Activated naive CD8-positive, alpha-beta T cell treated with anti-CD3 and anti-CD28 coated beads, Interleukin-2, amount 10 ng/mL, durations not matched to agents 7 days and 5 days (primary cell): ENCODE measurements at regions of chr14 and their contacts with region 1.

Region 1: GRCh38 chr14:22570132-22570949 is 18.7 kb downstream of the DAD1 start:
- DNase-seq: peak; percentile 64
- ATAC-seq: peak; percentile 85
- H3K4me3 Mint-ChIP-seq: peak overlapping the region; percentile 93
- H3K27ac Mint-ChIP-seq: peak overlapping the region; percentile 96
- H3K4me1 Mint-ChIP-seq: peaks cover 50% of the 10 kb centered on the region
- H3K27me3 Mint-ChIP-seq: no peaks in the 10 kb centered on the region

Region 2: GRCh38 chr14:21917699-21918436 is 652.5 kb before region 1 on chr14:
- POLR2A ChIA-PET with region 1: interaction called, 11 read pairs
- DNase-seq: no peak
- ATAC-seq: peak; percentile 59
- H3K4me3 Mint-ChIP-seq: peak overlapping the region; percentile 77
- H3K27ac Mint-ChIP-seq: peak overlapping the region; percentile 78
- H3K4me1 Mint-ChIP-seq: peaks cover 45% of the 10 kb centered on the region
- H3K27me3 Mint-ChIP-seq: no peaks in the 10 kb centered on the region

Region 3: DNA sequence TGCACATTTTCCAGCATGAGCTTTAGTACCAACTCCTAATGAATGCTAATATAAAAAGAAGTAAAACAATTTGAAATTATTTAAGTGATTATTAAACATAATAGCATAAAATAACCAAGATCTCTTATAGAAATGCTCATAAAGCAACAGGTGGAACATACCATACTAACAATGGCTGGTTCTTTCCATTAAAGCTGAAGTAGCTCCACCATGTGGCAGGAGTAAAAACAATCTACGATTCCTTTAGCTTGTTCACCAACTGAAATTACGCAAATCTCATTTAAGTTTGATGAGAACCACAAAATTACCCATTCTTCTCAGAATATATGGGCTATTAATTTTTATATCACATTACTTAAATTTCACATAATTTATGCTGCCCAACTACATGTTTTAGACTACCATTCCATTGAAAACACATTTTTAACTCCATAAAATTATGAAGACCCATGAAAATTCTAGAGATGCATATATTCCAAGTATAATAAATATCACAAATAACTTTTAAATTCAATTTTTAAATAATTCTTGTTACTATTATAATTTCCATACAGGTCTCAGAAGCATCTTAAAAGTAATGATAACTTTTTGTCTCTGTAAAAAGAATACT is 194.9 kb before region 1 on chr14:
- POLR2A ChIA-PET with region 1: no interaction called
- DNase-seq: no peak
- ATAC-seq: no peak
- H3K4me3 Mint-ChIP-seq: no peak overlapping the region
- H3K27ac Mint-ChIP-seq: no peak overlapping the region
- H3K4me1 Mint-ChIP-seq: no peaks in the 10 kb centered on the region
- H3K27me3 Mint-ChIP-seq: no peaks in the 10 kb centered on the region

Region 4: GRCh38 chr14:22519877-22520685 is 50.3 kb before region 1 on chr14:
- POLR2A ChIA-PET with region 1: interaction called, 315 read pairs
- DNase-seq: no peak
- ATAC-seq: no peak
- H3K4me3 Mint-ChIP-seq: peak overlapping the region; percentile 99
- H3K27ac Mint-ChIP-seq: peak overlapping the region; percentile 98
- H3K4me1 Mint-ChIP-seq: peaks cover 74% of the 10 kb centered on the region
- H3K27me3 Mint-ChIP-seq: no peaks in the 10 kb centered on the region

Region 5: DNA sequence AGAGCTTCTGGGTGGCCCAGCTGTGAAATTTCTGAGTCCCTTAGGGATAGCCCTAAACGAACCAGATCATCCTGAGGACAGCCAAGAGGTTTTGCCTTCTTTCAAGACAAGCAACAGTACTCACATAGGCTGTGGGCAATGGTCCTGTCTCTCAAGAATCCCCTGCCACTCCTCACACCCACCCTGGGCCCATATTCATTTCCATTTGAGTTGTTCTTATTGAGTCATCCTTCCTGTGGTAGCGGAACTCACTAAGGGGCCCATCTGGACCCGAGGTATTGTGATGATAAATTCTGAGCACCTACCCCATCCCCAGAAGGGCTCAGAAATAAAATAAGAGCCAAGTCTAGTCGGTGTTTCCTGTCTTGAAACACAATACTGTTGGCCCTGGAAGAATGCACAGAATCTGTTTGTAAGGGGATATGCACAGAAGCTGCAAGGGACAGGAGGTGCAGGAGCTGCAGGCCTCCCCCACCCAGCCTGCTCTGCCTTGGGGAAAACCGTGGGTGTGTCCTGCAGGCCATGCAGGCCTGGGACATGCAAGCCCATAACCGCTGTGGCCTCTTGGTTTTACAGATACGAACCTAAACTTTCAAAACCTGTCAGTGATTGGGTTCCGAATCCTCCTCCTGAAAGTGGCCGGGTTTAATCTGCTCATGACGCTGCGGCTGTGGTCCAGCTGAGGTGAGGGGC is 20.2 kb before region 1 on chr14:
- POLR2A ChIA-PET with region 1: interaction called, 224 read pairs
- DNase-seq: no peak
- ATAC-seq: peak; percentile 42
- H3K4me3 Mint-ChIP-seq: peak overlapping the region; percentile 86
- H3K27ac Mint-ChIP-seq: peak overlapping the region; percentile 99
- H3K4me1 Mint-ChIP-seq: peaks cover 88% of the 10 kb centered on the region
- H3K27me3 Mint-ChIP-seq: no peaks in the 10 kb centered on the region

Region 6: DNA sequence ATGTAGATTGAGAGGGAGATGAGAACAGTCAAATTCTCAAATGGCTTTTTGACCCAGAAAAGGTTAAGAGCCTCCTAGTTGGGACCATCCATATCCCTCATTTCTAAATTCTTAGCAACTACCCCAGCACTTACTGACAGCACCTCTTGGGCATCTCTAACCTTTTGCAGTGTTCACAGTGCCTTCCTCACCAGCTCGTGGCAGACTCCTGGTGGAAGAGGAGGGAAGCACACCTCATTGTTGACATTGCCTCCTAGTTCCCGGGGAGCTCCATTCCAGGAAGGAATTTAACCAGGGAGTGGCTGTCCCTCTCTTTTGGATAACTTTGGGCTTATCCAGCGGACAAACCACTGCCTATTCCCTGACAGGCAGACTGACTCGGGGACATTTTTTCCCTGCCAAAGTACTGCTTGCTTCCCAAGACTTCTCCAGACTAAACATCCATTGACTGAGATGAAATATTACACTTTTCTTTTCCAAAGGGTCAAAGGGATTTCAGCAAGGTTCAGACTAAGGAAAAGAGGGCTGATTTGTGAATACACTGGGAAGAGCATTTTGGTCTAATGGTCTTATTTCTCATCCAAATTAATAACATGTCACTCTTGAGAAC is 82.8 kb after region 1 on chr14:
- POLR2A ChIA-PET with region 1: interaction called, 12 read pairs
- DNase-seq: peak; percentile 36
- ATAC-seq: peak; percentile 85
- H3K4me3 Mint-ChIP-seq: no peak overlapping the region
- H3K27ac Mint-ChIP-seq: no peak overlapping the region
- H3K4me1 Mint-ChIP-seq: peaks cover 12% of the 10 kb centered on the region
- H3K27me3 Mint-ChIP-seq: peaks cover 8% of the 10 kb centered on the region

Region 7: GRCh38 chr14:22664261-22664660 is 93.9 kb after region 1 on chr14:
- POLR2A ChIA-PET with region 1: no interaction called
- DNase-seq: no peak
- ATAC-seq: no peak
- H3K4me3 Mint-ChIP-seq: no peak overlapping the region
- H3K27ac Mint-ChIP-seq: no peak overlapping the region
- H3K4me1 Mint-ChIP-seq: peaks cover 5% of the 10 kb centered on the region
- H3K27me3 Mint-ChIP-seq: peaks cover 5% of the 10 kb centered on the region